RWPE1 (cell line): ENCODE measurements at regions of chr11 and their contacts with region 1.

Region 1: GRCh38 chr11:2940559-2940929 is 11.3 kb upstream of the PHLDA2 start:
- DNase-seq: peak; percentile 59
- H3K27ac ChIP-seq: peak overlapping the region; percentile 87
- CTCF ChIP-seq: no peak

Region 2: DNA sequence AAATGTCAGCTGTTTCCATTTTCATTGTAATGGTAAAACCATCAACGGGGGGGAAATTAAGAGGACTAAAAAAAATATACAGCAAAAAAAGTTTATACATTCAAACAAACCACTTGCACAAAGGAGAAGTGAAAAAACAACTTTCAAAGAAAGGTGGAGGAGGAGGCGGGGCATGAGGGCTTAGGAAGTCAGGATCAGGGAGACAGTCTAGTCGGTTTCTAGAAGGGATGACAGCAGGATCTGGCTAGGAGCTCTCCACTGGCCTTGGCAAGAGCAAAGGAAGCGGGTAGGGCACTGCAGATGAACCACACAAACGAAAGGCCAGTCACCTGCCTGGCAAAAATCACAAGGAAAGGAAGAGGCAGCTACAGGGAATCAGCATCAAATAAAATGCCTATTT is 20.5 kb after region 1 on chr11:
- CTCF ChIA-PET with region 1: no interaction called
- POLR2A ChIA-PET with region 1: no interaction called
- DNase-seq: no peak
- H3K27ac ChIP-seq: no peak overlapping the region
- CTCF ChIP-seq: no peak

Region 3: GRCh38 chr11:3014057-3014938 is 73.8 kb after region 1 on chr11:
- CTCF ChIA-PET with region 1: interaction called, 10 read pairs
- POLR2A ChIA-PET with region 1: no interaction called
- DNase-seq: no peak
- H3K27ac ChIP-seq: peak overlapping the region; percentile 66
- CTCF ChIP-seq: no peak